ENCODE measurements at regions of chr14 and their contacts with region 1.

Region 1: GRCh38 chr14:54472315-54472714 is 16.5 kb downstream of the GMFB start:
- DNase-seq: no peak
- ATAC-seq: no peak
- H3K4me3 ChIP-seq: no peak overlapping the region
- H3K27ac ChIP-seq: no peak overlapping the region
- H3K4me1 ChIP-seq: no peaks in the 10 kb centered on the region
- H3K27me3 ChIP-seq: no peaks in the 10 kb centered on the region
- CTCF ChIP-seq: no peak
- EP300 ChIP-seq: no peak
- POLR2A ChIP-seq: no peak
- RAD21 ChIP-seq: no peak

Region 2: GRCh38 chr14:54483073-54483745 is 10.9 kb after region 1 on chr14:
- CTCF ChIA-PET with region 1: interaction called, 11 read pairs
- POLR2A ChIA-PET with region 1: interaction called, 3 read pairs
- RAD21 ChIA-PET with region 1: no interaction called
- SMC1A ChIA-PET with region 1: interaction called, 10 read pairs
- in situ Hi-C with region 1: no loop called
- intact Hi-C with region 1: no loop called
- DNase-seq: no peak
- ATAC-seq: peak; percentile 44
- H3K4me3 ChIP-seq: peak overlapping the region; percentile 50
- H3K27ac ChIP-seq: peak overlapping the region; percentile 64
- H3K4me1 ChIP-seq: peaks cover 10% of the 10 kb centered on the region
- H3K27me3 ChIP-seq: no peaks in the 10 kb centered on the region
- CTCF ChIP-seq: no peak
- EP300 ChIP-seq: no peak
- POLR2A ChIP-seq: no peak
- RAD21 ChIP-seq: no peak

Region 3: GRCh38 chr14:54493293-54493692 is 21.0 kb after region 1 on chr14:
- CTCF ChIA-PET with region 1: no interaction called
- POLR2A ChIA-PET with region 1: no interaction called
- RAD21 ChIA-PET with region 1: no interaction called
- SMC1A ChIA-PET with region 1: no interaction called
- in situ Hi-C with region 1: no loop called
- intact Hi-C with region 1: no loop called
- DNase-seq: no peak
- ATAC-seq: no peak
- H3K4me3 ChIP-seq: no peak overlapping the region
- H3K27ac ChIP-seq: no peak overlapping the region
- H3K4me1 ChIP-seq: no peaks in the 10 kb centered on the region; the same call in 1 of the 2 replicates
- H3K27me3 ChIP-seq: no peaks in the 10 kb centered on the region
- CTCF ChIP-seq: no peak
- EP300 ChIP-seq: no peak
- POLR2A ChIP-seq: no peak
- RAD21 ChIP-seq: no peak

Region 4: DNA sequence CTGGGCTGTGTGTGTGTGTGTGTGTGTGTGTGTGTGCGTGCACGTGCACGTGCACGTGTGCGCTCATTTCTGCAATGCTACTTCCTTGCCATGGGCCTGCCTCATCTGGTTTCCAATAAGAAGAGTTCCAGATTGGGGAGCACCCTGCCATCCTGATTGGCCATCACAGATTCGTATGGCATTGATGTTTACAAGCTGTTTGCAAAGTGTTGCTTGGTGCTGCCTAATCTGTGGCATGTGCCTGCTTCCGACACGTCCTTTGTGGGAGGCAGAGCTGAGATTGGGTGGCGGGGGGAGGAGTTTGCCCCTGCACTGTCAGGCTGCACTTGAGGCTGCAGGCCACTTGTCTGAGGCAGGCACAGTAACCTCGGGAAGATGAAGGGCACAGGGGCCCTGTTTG is 133.9 kb after region 1 on chr14:
- CTCF ChIA-PET with region 1: no interaction called
- POLR2A ChIA-PET with region 1: no interaction called
- RAD21 ChIA-PET with region 1: no interaction called
- SMC1A ChIA-PET with region 1: no interaction called
- in situ Hi-C with region 1: no loop called
- intact Hi-C with region 1: no loop called
- DNase-seq: no peak
- ATAC-seq: no peak
- H3K4me3 ChIP-seq: no peak overlapping the region
- H3K27ac ChIP-seq: no peak overlapping the region
- H3K4me1 ChIP-seq: no peaks in the 10 kb centered on the region
- H3K27me3 ChIP-seq: no peaks in the 10 kb centered on the region
- CTCF ChIP-seq: no peak
- EP300 ChIP-seq: no peak
- POLR2A ChIP-seq: no peak
- RAD21 ChIP-seq: no peak

Measured in GM12878 (cell line).